Activated CD4-positive, alpha-beta memory T cell treated with anti-CD3 and anti-CD28 coated beads for 36 hours (primary cell): ENCODE measurements at regions of chr16 and their contacts with region 1.

Region 1: GRCh38 chr16:75432828-75433731 is at the start of gene CFDP1:
- DNase-seq: peak; percentile 96
- H3K4me3 Mint-ChIP-seq: peak within 1 kb of the TSS; percentile 90
- H3K27ac Mint-ChIP-seq: peak within 1 kb of the TSS; percentile 87
- H3K4me1 Mint-ChIP-seq: peaks cover 32% of the 10 kb centered on the region
- H3K27me3 Mint-ChIP-seq: no peaks in the 10 kb centered on the region
- total RNA-seq, gene CFDP1: 37.6 to 41.3 TPM

Region 2: DNA sequence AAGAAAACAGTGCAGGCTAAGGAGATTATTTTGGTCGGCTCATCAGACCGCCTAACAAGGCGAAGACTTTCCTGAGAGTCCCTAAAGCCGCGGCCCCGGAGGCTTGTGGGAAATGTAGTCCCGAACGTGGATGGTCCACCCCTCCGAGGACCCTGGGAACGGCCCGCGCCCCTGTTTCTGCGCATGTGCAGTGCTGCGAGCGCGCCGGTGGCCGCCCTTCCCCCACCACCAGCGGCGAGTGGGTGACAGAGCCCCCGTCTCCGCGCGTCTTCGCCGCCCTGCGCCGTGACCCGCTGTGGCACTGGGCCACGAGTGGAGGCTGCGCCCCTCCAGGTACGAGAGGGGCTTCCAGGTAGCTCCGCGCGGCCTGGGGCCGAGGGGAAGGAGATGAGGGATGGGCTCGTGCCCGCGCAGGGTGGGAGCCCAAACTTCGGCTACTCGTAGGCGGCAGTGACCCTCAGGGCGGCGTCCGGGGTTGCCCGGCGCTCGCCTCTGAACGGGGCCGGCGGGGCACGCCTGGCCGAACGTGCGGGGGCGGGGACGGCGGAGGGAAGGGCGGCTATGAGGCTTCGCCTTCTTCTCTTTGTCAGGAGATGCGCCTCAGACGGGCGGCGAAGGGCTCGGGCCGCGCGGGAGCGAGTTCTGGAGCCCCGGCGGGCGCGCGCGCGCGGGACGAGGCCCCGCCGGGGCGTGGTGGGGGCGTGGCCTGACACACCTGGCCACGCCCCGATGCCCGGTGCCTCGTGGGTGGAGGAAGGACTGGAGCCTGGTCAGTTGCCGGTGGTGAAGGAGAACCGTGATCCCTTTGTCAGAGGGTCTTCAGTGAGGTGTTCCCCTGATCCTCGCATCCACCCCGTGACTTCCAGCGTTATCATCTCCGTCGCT is 284.5 kb before region 1 on chr16 and contains the start of gene ZFP1:
- CTCF ChIA-PET with region 1: no interaction called
- POLR2A ChIA-PET with region 1: no interaction called
- intact Hi-C with region 1: loop called (anchors 2 kb)
- DNase-seq: peak; percentile 96
- H3K4me3 Mint-ChIP-seq: peak within 1 kb of the TSS; percentile 87
- H3K27ac Mint-ChIP-seq: peak within 1 kb of the TSS; percentile 76
- H3K4me1 Mint-ChIP-seq: peaks cover 29% of the 10 kb centered on the region
- H3K27me3 Mint-ChIP-seq: no peaks in the 10 kb centered on the region
- total RNA-seq, gene ZFP1: 17.2 to 19.4 TPM

Region 3: GRCh38 chr16:75555707-75556430 is 122.8 kb after region 1 on chr16 and contains the start of gene TMEM231:
- CTCF ChIA-PET with region 1: no interaction called
- POLR2A ChIA-PET with region 1: no interaction called
- intact Hi-C with region 1: loop called (anchors 1 kb)
- DNase-seq: peak; percentile 98
- H3K4me3 Mint-ChIP-seq: peak within 1 kb of the TSS; percentile 88
- H3K27ac Mint-ChIP-seq: peak within 1 kb of the TSS; percentile 85
- H3K4me1 Mint-ChIP-seq: peaks cover 3% of the 10 kb centered on the region
- H3K27me3 Mint-ChIP-seq: peaks cover 4% of the 10 kb centered on the region
- total RNA-seq, gene TMEM231: 4.6 to 5.3 TPM

Region 4: GRCh38 chr16:75622761-75623605 is 189.9 kb after region 1 on chr16 and contains the start of gene ADAT1:
- CTCF ChIA-PET with region 1: interaction called, 3 read pairs
- POLR2A ChIA-PET with region 1: interaction called, 4 read pairs
- intact Hi-C with region 1: loop called (anchors 1 kb)
- DNase-seq: peak; percentile 99
- H3K4me3 Mint-ChIP-seq: peak within 1 kb of the TSS; percentile 96
- H3K27ac Mint-ChIP-seq: peak within 1 kb of the TSS; percentile 97
- H3K4me1 Mint-ChIP-seq: peaks cover 52% of the 10 kb centered on the region
- H3K27me3 Mint-ChIP-seq: no peaks in the 10 kb centered on the region
- total RNA-seq, gene ADAT1: 39.9 to 40.2 TPM